Left lung (tissue), 14 donors: ENCODE measurements at regions of chr3 and their contacts with region 1.

Region 1: GRCh38 chr3:149969940-149970715 is 567 bp downstream of the PFN2 start:
- DNase-seq: peak; percentile 84 to 96 (median 92)
- ATAC-seq: peak; percentile 80
- H3K4me3 ChIP-seq: peak overlapping the region; percentile 67 to 78
- H3K27ac ChIP-seq: peak overlapping the region; percentile 64 to 82
- H3K4me1 ChIP-seq: peaks cover 0 to 33% of the 10 kb centered on the region in 2 donors
- H3K27me3 ChIP-seq: peaks cover 4 to 58% of the 10 kb centered on the region in 2 donors
- CTCF ChIP-seq: no peak

Region 2: DNA sequence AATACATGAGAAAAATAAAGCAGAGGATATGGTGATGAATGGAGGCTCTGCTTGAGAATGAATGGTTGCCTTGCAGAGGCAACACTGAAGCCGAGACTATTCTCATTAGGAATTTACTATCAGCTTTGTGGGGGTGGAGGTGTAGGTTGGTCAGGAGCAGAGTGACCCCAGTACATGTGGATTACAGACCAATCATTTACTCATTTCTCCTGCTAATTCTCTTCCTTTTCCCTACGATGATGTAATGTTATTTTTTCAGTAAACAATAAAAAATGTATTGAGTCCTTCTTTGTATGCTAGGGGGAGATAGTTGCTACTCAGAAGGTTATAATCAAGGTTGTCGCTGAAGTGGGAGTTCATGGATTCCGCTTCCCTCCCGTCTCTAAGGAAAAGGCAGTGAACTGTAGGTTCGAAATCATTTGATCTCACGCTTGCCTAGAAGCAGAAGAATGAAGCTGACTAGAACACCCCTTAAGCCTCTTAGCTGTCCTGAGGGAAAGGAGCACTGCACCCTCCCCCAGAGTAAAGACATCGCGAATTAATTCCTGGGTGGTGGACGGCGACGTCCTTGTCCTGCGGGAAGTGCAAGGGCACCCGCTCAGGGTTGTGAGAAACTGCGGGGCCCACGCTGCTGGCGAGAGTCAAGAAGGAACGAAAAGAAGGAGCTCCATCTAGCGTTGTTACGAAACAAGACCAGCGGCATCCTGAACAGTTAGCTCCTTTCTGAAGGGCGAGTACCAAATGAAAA is 213.7 kb after region 1 on chr3:
- intact Hi-C with region 1: loop called in 1 of 2 experiments (anchors 10 kb)
- DNase-seq: peak; percentile 61 to 83 (median 80)
- ATAC-seq: peak; percentile 99
- H3K4me3 ChIP-seq: peak overlapping the region; percentile 2 to 10
- H3K27ac ChIP-seq: no peak overlapping the region
- H3K4me1 ChIP-seq: peaks cover 0 to 10% of the 10 kb centered on the region in 2 donors
- H3K27me3 ChIP-seq: peaks cover 0 to 12% of the 10 kb centered on the region in 2 donors
- CTCF ChIP-seq: peak; percentile 39 to 51